Calu3 (cell line): ENCODE measurements at regions of chr16 and their contacts with region 1.

Region 1: DNA sequence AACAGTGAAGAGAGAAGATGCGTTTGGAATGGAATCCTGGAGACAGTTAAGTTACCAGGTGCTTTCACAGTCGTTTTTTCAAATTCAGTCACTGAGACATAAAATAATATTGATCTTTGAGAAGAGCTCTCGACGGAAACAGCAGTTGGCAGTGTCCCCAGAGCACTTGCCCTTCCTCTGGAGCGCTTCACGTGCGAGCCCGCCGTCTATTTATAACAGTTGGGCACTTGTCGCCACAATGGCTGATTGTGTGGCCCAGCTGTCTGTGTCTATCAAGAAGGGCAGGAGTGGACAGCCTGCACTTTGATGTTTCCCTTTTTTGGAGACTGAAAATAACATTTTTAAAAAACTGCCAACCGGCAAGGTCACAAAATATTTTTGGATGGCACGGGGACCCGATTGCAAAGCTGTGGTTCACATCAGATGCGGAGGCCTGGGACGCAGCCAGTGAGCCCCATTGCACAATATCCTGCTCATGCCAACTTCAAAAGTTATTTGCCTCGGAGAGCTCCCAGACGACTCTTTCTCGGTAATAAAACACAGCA is 62.9 kb downstream of the ADCY9 start:
- DNase-seq: peak; percentile 63
- H3K4me3 Mint-ChIP-seq: peak overlapping the region; percentile 55
- H3K27ac Mint-ChIP-seq: peak overlapping the region; percentile 70
- H3K4me1 Mint-ChIP-seq: peaks cover 28% of the 10 kb centered on the region
- H3K27me3 Mint-ChIP-seq: no peaks in the 10 kb centered on the region
- CTCF ChIP-seq: no peak

Region 2: DNA sequence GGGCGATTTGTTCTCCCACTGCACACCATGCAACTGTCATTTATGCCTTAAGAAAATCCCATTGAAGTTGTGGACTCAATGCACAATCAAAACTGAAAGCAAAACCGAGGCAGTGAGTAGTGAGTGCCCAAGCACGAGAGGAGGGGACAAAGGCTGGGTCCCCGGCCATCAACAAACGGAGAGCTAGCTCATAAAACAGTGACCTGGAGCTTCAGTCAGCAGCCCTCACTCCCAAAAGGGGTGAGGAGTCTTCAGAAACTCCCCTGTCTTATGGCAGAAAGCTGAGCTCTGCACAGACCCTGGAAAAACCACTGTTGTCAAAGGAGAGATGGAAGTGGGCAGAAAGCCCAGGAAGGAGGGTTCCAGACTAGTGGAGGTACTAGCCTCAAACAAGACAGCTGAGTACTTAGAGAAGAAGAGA is 34.0 kb before region 1 on chr16:
- CTCF ChIA-PET with region 1: interaction called, 5 read pairs
- intact Hi-C with region 1: loop called (anchors 5 kb)
- DNase-seq: peak; percentile 16
- H3K4me3 Mint-ChIP-seq: peak overlapping the region; percentile 30
- H3K27ac Mint-ChIP-seq: no peak overlapping the region
- H3K4me1 Mint-ChIP-seq: peaks cover 47% of the 10 kb centered on the region
- H3K27me3 Mint-ChIP-seq: no peaks in the 10 kb centered on the region
- CTCF ChIP-seq: no peak